ENCODE measurements at regions of chr12 and their contacts with region 1.

Region 1: GRCh38 chr12:131830335-131830913 is 2.2 kb downstream of the MMP17 start:
- DNase-seq: peak; percentile 74 to 86
- ATAC-seq: peak; percentile 86 to 93 (median 91)
- H3K4me3 ChIP-seq: peak overlapping the region; percentile 29 to 58 (median 56)
- H3K27ac ChIP-seq: peak overlapping the region in 8 of 10 donors; percentile 30 to 68 (median 62)
- H3K4me1 ChIP-seq: peaks cover 8 to 40% (median 30%) of the 10 kb centered on the region in 9 donors
- H3K27me3 ChIP-seq: peaks cover 0 to 87% (median 75%) of the 10 kb centered on the region in 7 donors
- CTCF ChIP-seq: peak; percentile 31 to 77 (median 68)

Region 2: DNA sequence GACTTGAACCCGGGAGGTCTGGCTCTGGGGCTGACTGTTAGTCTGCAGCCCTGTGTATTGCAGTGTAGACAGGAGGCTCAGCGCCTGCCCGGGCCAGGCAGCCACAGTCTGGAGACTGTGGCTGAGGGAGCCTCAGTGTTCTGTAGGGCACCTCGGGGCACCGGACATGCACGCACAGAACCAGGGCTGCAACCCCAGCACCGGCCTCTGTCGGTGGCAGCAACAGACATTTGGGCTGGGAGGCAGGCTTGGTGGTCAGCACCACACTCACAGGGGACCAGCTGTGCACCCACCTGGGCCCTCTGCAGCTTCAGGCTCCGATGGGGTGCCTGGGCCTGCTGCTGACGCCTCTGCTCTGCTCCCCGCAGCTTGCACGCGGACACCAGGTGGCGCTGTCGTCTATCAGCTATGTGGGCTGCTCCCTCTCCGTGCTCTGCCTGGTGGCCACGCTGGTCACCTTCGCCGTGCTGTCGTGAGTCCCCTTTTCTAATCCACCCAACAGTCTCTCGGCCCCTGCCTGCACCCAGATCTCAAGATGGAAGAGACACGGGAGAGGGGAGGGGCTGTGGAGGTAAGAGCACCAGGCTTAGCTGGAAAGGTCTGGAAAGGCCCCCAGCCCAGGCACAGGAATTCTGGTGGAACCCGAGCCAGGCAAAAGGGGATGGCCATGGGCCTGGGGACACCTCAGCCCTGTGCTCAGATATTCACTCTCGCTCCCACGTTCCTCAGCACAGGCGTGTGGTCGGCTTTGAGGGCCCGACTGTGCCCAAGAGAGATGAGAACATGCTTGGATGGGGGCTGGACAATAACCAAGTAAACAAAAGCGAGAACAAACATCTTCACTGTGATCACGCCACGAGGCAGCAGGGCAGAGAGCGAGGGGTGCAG is 725.7 kb before region 1 on chr12:
- intact Hi-C with region 1: loop called in 2 of 10 experiments (anchors 5 to 10 kb)
- DNase-seq: peak; percentile 87 to 90
- ATAC-seq: peak; percentile 84 to 96 (median 92)
- H3K4me3 ChIP-seq: no peak overlapping the region
- H3K27ac ChIP-seq: peak overlapping the region in 3 of 10 donors; percentile 11 to 48 (median 12)
- H3K4me1 ChIP-seq: peaks cover 0 to 17% (median 12%) of the 10 kb centered on the region in 9 donors
- H3K27me3 ChIP-seq: no peaks in the 10 kb centered on the region
- CTCF ChIP-seq: peak; percentile 74 to 96 (median 93)

Region 3: DNA sequence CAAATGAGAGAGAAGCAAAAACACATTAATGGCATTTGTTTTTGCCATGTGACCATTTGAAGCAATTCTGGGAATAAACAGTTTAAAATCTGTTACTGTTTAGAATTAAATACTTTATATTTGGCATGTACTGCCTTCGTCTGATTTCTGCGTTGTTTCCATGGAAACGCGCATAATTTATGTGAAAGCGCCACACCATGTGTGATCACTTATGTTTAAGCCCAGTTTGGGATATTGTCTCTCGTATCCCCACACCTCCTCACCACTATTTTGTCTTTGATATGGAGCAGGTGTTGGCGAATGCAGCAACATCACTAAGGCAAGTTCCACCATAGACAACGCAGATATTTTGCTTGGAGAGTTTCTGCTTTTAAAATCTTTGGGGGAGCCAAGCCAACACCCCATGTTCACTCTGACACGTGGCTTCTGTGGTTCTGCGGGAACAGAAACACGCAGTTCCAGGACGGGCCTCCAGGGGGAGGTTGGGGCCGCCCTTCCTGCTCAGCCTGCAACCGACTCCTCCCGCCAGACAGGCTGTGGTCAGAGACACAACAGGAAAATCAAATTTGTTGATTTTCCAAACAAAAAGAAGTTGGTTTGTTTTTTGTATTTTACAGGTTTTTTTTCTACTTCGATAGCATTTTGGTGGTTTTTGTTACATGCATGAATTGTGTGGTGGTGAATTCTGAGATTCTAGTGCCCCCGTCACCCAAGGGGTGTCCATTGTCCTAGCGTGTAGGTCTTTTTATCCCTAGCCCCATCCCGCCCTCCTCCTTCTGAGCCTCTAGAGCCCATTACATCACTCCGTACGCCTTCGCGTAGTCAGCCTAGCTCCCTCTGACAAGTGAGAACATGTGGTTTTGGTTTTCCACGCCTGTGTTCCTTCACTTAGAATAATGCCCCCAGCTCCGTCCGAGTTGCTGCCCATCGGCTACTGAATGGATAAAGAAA is 221.4 kb before region 1 on chr12:
- intact Hi-C with region 1: loop called in 3 of 10 experiments (anchors 2 to 10 kb)
- DNase-seq: peak; percentile 71 to 75
- ATAC-seq: peak; percentile 71 to 93 (median 88)
- H3K4me3 ChIP-seq: peak overlapping the region in 3 of 10 donors; percentile 2 to 13 (median 10)
- H3K27ac ChIP-seq: no peak overlapping the region
- H3K4me1 ChIP-seq: peaks cover 0 to 45% (median 0%) of the 10 kb centered on the region in 9 donors
- H3K27me3 ChIP-seq: peaks cover 0 to 53% (median 14%) of the 10 kb centered on the region in 7 donors
- CTCF ChIP-seq: peak; percentile 70 to 93 (median 84)

Region 4: GRCh38 chr12:131894313-131894860 is 64.0 kb after region 1 on chr12 and contains the start of gene ULK1:
- intact Hi-C with region 1: loop called in 1 of 10 experiments (anchors 10 kb)
- DNase-seq: peak; percentile 92 to 96
- ATAC-seq: peak; percentile 68 to 80 (median 76)
- H3K4me3 ChIP-seq: peak within 1 kb of the TSS; percentile 40 to 85 (median 64)
- H3K27ac ChIP-seq: peak within 1 kb of the TSS; percentile 94 to 99 (median 98)
- H3K4me1 ChIP-seq: peaks cover 8 to 35% (median 24%) of the 10 kb centered on the region in 9 donors
- H3K27me3 ChIP-seq: no peaks in the 10 kb centered on the region
- CTCF ChIP-seq: no peak
- total RNA-seq, gene ULK1: 30.2 to 77.7 (median 51.6) TPM

Region 5: DNA sequence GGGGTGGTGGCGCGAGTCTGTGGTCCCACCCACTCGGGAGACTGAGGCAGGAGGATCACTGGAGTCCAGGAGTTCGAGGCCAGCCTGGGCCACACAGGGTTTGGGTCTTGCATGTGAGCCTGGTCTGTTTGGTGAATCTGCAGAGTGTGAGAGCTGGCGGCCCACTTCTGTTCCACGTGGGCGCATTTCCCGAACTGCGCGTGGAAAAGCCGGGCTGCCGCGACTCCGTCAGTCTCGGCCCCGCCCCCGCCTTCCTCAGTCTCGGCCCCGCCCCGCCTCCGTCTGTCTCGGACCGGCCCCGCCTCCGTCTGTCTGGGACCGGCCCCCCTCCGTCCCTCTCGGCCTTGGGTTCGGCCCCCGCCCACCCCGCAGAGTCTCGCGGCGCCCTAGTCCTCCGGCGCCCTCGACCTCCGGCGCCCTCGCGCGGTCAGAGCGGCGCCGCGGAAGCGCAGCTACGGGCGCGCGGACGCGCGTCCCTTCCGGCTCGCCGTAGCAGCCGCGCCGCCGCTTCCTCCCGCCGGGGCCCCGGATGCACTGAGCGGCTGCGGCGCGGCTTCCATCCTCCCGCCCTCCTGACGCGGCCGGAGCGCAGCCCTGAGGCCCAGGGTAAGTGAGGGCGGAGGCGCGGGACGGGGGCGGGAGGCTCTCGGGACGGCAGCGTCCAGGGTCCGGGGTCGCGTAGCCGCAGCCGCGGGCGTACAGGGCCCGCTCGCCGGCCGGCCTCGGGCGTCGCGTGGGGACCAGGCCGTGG is 119.2 kb after region 1 on chr12 and contains the start of gene EP400:
- intact Hi-C with region 1: loop called in 2 of 10 experiments (anchors 5 to 10 kb)
- DNase-seq: peak; percentile 96 to 97
- ATAC-seq: peak; percentile 98 to 99 (median 99)
- H3K4me3 ChIP-seq: peak within 1 kb of the TSS; percentile 76 to 100 (median 92)
- H3K27ac ChIP-seq: peak within 1 kb of the TSS; percentile 58 to 92 (median 80)
- H3K4me1 ChIP-seq: peaks cover 4 to 50% (median 29%) of the 10 kb centered on the region in 9 donors
- H3K27me3 ChIP-seq: no peaks in the 10 kb centered on the region
- CTCF ChIP-seq: peak; percentile 17 to 77 (median 60)
- total RNA-seq, gene EP400: 14.1 to 20.5 (median 19.3) TPM

Measured in heart right ventricle (tissue), 16 donors.